AG04450 (cell line): ENCODE measurements at regions of chr3 and their contacts with region 1.

Region 1: GRCh38 chr3:106609666-106610301 is 741.0 kb upstream of the CBLB start:
- DNase-seq: peak; percentile 87
- H3K4me3 ChIP-seq: no peak overlapping the region
- H3K27ac ChIP-seq: no peak overlapping the region
- H3K27me3 ChIP-seq: no peaks in the 10 kb centered on the region
- CTCF ChIP-seq: peak; percentile 93

Region 2: GRCh38 chr3:105686278-105686897 is 923.4 kb before region 1 on chr3:
- CTCF ChIA-PET with region 1: interaction called, 18 read pairs
- POLR2A ChIA-PET with region 1: no interaction called
- DNase-seq: peak; percentile 2
- H3K4me3 ChIP-seq: no peak overlapping the region
- H3K27ac ChIP-seq: no peak overlapping the region
- H3K27me3 ChIP-seq: no peaks in the 10 kb centered on the region
- CTCF ChIP-seq: peak; percentile 79

Region 3: GRCh38 chr3:106862067-106862466 is 252.3 kb after region 1 on chr3:
- CTCF ChIA-PET with region 1: interaction called, 17 read pairs
- POLR2A ChIA-PET with region 1: interaction called, 5 read pairs
- DNase-seq: no peak
- H3K4me3 ChIP-seq: no peak overlapping the region
- H3K27ac ChIP-seq: no peak overlapping the region
- H3K27me3 ChIP-seq: no peaks in the 10 kb centered on the region
- CTCF ChIP-seq: peak; percentile 50

Region 4: DNA sequence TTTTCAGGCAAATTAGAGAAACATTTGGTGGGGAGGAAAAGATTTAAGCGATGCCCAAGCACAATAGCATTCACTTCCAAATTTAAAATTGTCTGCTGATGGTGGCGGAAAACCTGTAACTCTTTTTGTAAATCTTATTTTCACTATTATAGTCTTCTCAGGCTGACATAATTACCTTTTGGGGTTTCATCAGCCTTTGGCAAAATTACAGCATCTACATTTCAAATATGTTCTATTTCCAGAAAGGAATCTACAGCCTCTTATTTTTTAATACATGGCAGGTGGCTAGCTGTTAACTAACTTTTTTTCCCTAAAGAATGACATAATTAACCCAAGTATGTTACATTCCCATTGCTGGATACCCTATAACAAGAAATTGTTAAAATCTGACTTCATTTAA is 375.9 kb after region 1 on chr3:
- CTCF ChIA-PET with region 1: no interaction called
- POLR2A ChIA-PET with region 1: no interaction called
- DNase-seq: no peak
- H3K4me3 ChIP-seq: no peak overlapping the region
- H3K27ac ChIP-seq: no peak overlapping the region
- H3K27me3 ChIP-seq: no peaks in the 10 kb centered on the region
- CTCF ChIP-seq: no peak

Region 5: GRCh38 chr3:107117922-107118536 is 508.2 kb after region 1 on chr3:
- CTCF ChIA-PET with region 1: interaction called, 18 read pairs
- POLR2A ChIA-PET with region 1: no interaction called
- DNase-seq: peak; percentile 43
- H3K4me3 ChIP-seq: no peak overlapping the region
- H3K27ac ChIP-seq: no peak overlapping the region
- H3K27me3 ChIP-seq: no peaks in the 10 kb centered on the region
- CTCF ChIP-seq: peak; percentile 64